Activated naive CD4-positive, alpha-beta T cell treated with anti-CD3 and anti-CD28 coated beads for 36 hours (primary cell): ENCODE measurements at regions of chr4 and their contacts with region 1.

Region 1: GRCh38 chr4:183244506-183244905 is 75.6 kb downstream of the CLDN22 start:
- DNase-seq: no peak
- H3K4me3 Mint-ChIP-seq: no peak overlapping the region
- H3K27ac Mint-ChIP-seq: no peak overlapping the region
- H3K4me1 Mint-ChIP-seq: no peaks in the 10 kb centered on the region
- H3K27me3 Mint-ChIP-seq: no peaks in the 10 kb centered on the region

Region 2: DNA sequence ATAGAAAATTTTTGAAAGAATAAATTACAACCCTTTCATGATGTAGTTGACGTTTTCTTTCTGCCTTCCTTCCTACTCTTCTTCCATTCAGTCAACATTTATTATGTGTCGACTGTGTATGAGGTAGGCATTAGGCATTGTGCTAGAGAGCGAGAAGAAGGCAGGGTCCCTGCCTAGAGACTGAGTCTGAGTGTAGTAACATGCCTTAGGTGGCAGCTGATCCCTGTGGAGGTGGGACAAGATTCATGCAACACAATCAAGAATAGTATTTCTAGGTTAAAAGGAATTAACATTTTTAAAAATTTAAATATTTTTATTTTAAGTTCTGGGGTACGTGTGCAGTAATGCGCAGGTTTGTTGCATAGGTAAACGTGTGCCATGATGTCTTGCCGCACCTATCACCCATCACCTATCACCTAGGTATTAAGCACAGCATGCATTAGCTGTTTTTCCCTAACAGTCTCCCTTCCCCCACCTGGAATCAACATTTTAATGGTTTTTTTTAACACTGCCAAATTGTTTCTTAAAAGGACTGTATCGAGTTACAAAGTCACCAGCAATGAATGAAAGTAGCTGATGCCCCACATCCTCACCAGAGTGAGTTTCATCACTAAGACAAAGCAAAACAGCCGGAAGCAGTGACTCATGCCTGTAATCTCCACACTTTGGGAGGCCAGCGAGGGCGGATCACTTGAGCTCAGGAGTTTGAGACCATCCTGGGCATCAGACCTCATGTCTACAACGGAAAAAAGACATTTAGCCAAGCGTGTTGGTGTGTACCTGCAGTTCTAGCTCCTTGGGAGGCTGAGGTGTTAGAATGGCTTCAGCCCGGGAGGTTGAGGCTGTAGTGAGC is 61.4 kb before region 1 on chr4:
- CTCF ChIA-PET with region 1: no interaction called
- intact Hi-C with region 1: no loop called
- DNase-seq: peak; percentile 31
- H3K4me3 Mint-ChIP-seq: no peak overlapping the region
- H3K27ac Mint-ChIP-seq: no peak overlapping the region
- H3K4me1 Mint-ChIP-seq: peaks cover 32% of the 10 kb centered on the region
- H3K27me3 Mint-ChIP-seq: no peaks in the 10 kb centered on the region

Region 3: GRCh38 chr4:183256756-183257385 is 12.4 kb after region 1 on chr4:
- CTCF ChIA-PET with region 1: interaction called, 35 read pairs
- intact Hi-C with region 1: no loop called
- DNase-seq: peak; percentile 60
- H3K4me3 Mint-ChIP-seq: no peak overlapping the region
- H3K27ac Mint-ChIP-seq: no peak overlapping the region
- H3K4me1 Mint-ChIP-seq: no peaks in the 10 kb centered on the region
- H3K27me3 Mint-ChIP-seq: no peaks in the 10 kb centered on the region